CD8-positive, alpha-beta memory T cell (primary cell): ENCODE measurements at regions of chr2 and their contacts with region 1.

Region 1: GRCh38 chr2:231425811-231426728 is 30.6 kb downstream of the B3GNT7 start:
- DNase-seq: peak; percentile 29 to 92 (median 74)
- H3K4me3 ChIP-seq: no peak overlapping the region
- H3K4me3 Mint-ChIP-seq: peak overlapping the region; percentile 23 to 82 (median 75)
- H3K27ac ChIP-seq: peak overlapping the region; percentile 81
- H3K27ac Mint-ChIP-seq: peak overlapping the region; percentile 96 to 99 (median 98)
- H3K4me1 ChIP-seq: peaks cover 10% of the 10 kb centered on the region
- H3K4me1 Mint-ChIP-seq: peaks cover 14 to 24% (median 22%) of the 10 kb centered on the region in 3 donors
- H3K27me3 ChIP-seq: no peaks in the 10 kb centered on the region
- H3K27me3 Mint-ChIP-seq: peaks cover 0 to 2% of the 10 kb centered on the region in 2 donors

Region 2: GRCh38 chr2:231138699-231139098 is 287.4 kb before region 1 on chr2:
- CTCF ChIA-PET with region 1: no interaction called
- POLR2A ChIA-PET with region 1: no interaction called
- DNase-seq: no peak
- H3K4me3 ChIP-seq: no peak overlapping the region
- H3K4me3 Mint-ChIP-seq: no peak overlapping the region
- H3K27ac ChIP-seq: no peak overlapping the region
- H3K27ac Mint-ChIP-seq: no peak overlapping the region
- H3K4me1 ChIP-seq: no peaks in the 10 kb centered on the region
- H3K4me1 Mint-ChIP-seq: no peaks in the 10 kb centered on the region
- H3K27me3 ChIP-seq: no peaks in the 10 kb centered on the region
- H3K27me3 Mint-ChIP-seq: no peaks in the 10 kb centered on the region

Region 3: DNA sequence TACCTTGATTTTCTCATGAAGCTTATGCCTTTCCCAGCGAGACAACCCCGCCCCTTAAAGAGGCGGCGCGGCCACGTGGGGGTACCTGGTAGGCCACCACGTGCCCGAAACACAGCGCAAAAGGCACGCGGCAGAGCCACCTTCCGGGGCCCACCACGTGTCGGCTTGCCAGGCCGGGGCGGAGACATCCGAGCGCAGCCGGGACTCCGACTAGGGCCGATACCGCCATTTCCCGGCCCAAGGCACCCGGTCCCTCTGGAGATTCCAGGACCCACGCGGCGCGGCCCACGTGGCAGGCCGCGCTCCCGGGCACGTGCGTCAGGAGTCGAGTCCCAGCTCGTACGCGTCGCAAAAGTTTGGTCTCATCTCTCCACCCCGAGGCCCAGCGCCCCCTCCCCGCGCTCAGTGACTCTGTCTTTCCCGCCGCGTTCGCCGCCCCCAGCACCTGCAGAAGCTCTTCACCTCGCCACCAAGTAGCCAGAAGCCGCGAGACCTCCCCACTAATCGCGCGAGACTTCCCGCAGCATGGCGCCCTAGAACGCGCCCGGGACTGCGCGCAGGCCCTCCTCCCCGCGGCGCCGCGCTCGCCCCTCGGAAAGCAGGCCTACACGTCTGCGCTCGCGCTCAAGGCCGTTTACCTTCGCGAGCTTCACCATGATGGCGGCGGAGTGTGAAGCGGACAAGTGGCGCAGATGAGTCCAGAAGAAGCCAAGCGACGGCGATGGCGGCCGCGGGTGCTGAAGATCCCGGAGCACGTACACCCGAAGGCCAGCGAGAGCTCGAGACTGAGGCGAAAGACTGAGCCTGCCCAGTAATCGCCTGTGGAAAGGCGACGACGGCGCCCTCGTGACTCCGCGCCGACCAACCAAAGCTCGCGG is 37.9 kb after region 1 on chr2 and contains the start of gene NCL:
- CTCF ChIA-PET with region 1: no interaction called
- POLR2A ChIA-PET with region 1: interaction called, 14 read pairs
- DNase-seq: peak; percentile 79 to 93 (median 88)
- H3K4me3 ChIP-seq: peak within 1 kb of the TSS; percentile 88
- H3K4me3 Mint-ChIP-seq: peak within 1 kb of the TSS; percentile 94 to 100 (median 96)
- H3K27ac ChIP-seq: peak within 1 kb of the TSS; percentile 98
- H3K27ac Mint-ChIP-seq: peak within 1 kb of the TSS; percentile 98 to 100 (median 100)
- H3K4me1 ChIP-seq: peaks cover 42% of the 10 kb centered on the region
- H3K4me1 Mint-ChIP-seq: peaks cover 47 to 55% (median 54%) of the 10 kb centered on the region in 3 donors
- H3K27me3 ChIP-seq: no peaks in the 10 kb centered on the region
- H3K27me3 Mint-ChIP-seq: peaks cover 0 to 13% of the 10 kb centered on the region in 2 donors
- total RNA-seq, gene NCL: 1,673 to 1,772 TPM